Activated naive CD4-positive, alpha-beta T cell treated with anti-CD3 and anti-CD28 coated beads for 36 hours (primary cell): ENCODE measurements at regions of chr18 and their contacts with region 1.

Region 1: DNA sequence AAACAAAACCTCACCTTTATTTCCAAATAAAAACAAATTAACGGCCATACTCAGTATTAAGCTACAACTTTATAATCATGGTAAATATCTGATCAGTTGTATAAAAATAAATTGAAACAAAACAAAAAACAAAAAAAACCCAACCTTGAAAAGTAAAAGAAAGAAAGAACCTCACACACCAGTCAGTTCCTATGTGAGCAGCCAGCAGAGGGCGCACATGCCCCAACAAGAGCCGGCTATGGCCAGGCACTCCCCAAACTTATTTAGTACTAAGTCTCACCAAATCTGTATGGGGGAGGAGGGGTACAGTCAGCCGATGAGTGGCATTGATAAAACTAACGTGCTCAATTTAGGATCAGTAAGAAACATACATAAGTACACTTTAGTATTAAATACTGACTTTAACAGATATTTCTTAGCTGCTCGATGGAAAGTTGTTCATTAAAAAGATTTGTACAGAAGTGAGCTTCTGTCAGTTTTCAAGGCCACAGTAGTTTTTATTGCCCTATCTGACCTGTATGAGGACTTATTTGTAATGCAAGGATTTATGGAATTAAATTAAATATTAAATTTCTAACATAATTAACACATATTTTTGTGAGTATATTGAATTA is 172.6 kb downstream of the TCF4 start:
- DNase-seq: peak; percentile 85
- H3K4me3 Mint-ChIP-seq: no peak overlapping the region
- H3K27ac Mint-ChIP-seq: no peak overlapping the region
- H3K4me1 Mint-ChIP-seq: peaks cover 2% of the 10 kb centered on the region
- H3K27me3 Mint-ChIP-seq: peaks cover 7% of the 10 kb centered on the region

Region 2: GRCh38 chr18:55048892-55049291 is 366.5 kb before region 1 on chr18:
- CTCF ChIA-PET with region 1: no interaction called
- intact Hi-C with region 1: no loop called
- DNase-seq: no peak
- H3K4me3 Mint-ChIP-seq: no peak overlapping the region
- H3K27ac Mint-ChIP-seq: no peak overlapping the region
- H3K4me1 Mint-ChIP-seq: no peaks in the 10 kb centered on the region
- H3K27me3 Mint-ChIP-seq: no peaks in the 10 kb centered on the region

Region 3: DNA sequence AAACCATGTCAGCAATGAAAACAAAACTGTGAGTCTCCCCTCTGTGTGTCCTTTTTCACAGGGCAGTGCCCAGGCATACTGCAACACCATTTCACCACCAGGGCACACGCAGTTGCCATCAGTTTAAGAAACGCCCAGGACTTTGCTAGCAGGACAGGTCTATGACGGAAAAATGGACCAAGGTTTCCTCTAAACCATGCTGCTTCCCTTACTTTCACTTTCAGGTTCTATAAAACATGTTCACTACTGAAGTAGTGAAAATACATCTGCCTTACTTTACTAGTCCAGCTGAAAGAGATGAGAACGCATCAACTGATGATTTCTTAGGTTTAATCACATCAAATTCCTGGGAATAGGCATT is 62.1 kb after region 1 on chr18:
- CTCF ChIA-PET with region 1: no interaction called
- intact Hi-C with region 1: loop called (anchors 10 kb)
- DNase-seq: peak; percentile 16
- H3K4me3 Mint-ChIP-seq: peak overlapping the region; percentile 76
- H3K27ac Mint-ChIP-seq: no peak overlapping the region
- H3K4me1 Mint-ChIP-seq: peaks cover 13% of the 10 kb centered on the region
- H3K27me3 Mint-ChIP-seq: no peaks in the 10 kb centered on the region

Region 4: GRCh38 chr18:55589625-55590291 is 174.4 kb after region 1 on chr18:
- CTCF ChIA-PET with region 1: no interaction called
- intact Hi-C with region 1: loop called (anchors 2 kb)
- DNase-seq: peak; percentile 86
- H3K4me3 Mint-ChIP-seq: peak overlapping the region; percentile 70
- H3K27ac Mint-ChIP-seq: no peak overlapping the region
- H3K4me1 Mint-ChIP-seq: peaks cover 19% of the 10 kb centered on the region
- H3K27me3 Mint-ChIP-seq: peaks cover 59% of the 10 kb centered on the region

Region 5: GRCh38 chr18:56575819-56576663 is 1160.7 kb after region 1 on chr18:
- CTCF ChIA-PET with region 1: interaction called, 8 read pairs
- intact Hi-C with region 1: loop called (anchors 1 kb)
- DNase-seq: no peak
- H3K4me3 Mint-ChIP-seq: no peak overlapping the region
- H3K27ac Mint-ChIP-seq: no peak overlapping the region
- H3K4me1 Mint-ChIP-seq: no peaks in the 10 kb centered on the region
- H3K27me3 Mint-ChIP-seq: peaks cover 2% of the 10 kb centered on the region